Heart left ventricle (tissue), 16 donors: ENCODE measurements at regions of chr13 and their contacts with region 1.

Region 1: DNA sequence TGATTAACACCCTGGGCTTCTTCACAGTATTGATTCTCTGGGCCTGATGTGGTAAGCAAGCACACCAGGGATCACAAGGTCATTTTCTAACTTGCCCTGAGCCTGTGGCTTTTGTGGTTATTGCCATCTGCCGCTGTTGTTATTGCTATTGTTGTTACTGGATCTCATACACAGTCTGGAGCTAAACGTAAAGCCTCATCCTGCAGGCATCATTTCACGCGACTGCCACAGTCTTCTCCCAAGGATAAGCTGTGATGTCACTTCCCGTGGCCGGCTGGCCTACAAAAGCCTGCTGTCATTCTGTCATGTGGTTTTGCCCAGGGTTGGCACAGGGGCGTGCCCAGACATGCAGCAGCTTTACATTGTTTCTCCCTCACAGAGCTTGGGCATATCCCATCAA is 154.0 kb upstream of the GPR12 start:
- DNase-seq: no peak
- ATAC-seq: no peak
- H3K4me3 ChIP-seq: no peak overlapping the region
- H3K27ac ChIP-seq: no peak overlapping the region
- H3K4me1 ChIP-seq: no peaks in the 10 kb centered on the region
- H3K27me3 ChIP-seq: peaks cover 0 to 12% (median 0%) of the 10 kb centered on the region in 9 donors
- CTCF ChIP-seq: no peak
- POLR2A ChIP-seq: no peak

Region 2: DNA sequence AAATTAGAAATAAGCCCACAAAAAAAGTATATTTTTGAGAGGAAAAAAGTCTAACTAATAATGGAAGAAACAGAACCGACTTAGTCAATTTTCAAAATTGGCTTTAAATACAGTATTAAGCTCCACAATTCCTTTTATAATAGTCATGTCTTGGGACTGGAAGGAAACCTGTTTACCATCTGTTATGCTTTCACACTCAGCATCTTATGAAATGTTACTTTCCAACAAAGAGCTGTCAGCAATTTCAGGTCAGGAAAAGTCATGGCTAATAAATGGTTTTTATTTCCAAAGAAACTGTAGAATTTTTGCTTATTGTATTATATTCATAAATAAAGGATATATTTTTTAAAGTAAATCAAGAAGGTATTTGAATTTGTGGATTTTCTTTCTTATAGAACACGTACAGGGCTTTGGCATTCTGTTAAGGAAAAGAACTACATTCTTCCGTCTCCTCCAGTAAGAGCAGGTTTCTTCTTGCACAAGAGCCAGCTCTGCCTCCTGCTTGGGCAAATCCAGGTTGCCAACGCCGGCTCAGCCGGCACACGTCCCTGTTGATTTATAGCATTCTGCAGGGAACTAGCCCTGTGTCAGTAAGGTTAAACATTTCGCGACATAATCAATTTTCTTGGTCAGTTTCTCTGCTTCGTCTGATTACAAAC is 101.2 kb before region 1 on chr13:
- intact Hi-C with region 1: no loop called
- DNase-seq: no peak
- ATAC-seq: no peak
- H3K4me3 ChIP-seq: no peak overlapping the region
- H3K27ac ChIP-seq: no peak overlapping the region
- H3K4me1 ChIP-seq: no peaks in the 10 kb centered on the region
- H3K27me3 ChIP-seq: no peaks in the 10 kb centered on the region
- CTCF ChIP-seq: no peak
- POLR2A ChIP-seq: no peak

Region 3: DNA sequence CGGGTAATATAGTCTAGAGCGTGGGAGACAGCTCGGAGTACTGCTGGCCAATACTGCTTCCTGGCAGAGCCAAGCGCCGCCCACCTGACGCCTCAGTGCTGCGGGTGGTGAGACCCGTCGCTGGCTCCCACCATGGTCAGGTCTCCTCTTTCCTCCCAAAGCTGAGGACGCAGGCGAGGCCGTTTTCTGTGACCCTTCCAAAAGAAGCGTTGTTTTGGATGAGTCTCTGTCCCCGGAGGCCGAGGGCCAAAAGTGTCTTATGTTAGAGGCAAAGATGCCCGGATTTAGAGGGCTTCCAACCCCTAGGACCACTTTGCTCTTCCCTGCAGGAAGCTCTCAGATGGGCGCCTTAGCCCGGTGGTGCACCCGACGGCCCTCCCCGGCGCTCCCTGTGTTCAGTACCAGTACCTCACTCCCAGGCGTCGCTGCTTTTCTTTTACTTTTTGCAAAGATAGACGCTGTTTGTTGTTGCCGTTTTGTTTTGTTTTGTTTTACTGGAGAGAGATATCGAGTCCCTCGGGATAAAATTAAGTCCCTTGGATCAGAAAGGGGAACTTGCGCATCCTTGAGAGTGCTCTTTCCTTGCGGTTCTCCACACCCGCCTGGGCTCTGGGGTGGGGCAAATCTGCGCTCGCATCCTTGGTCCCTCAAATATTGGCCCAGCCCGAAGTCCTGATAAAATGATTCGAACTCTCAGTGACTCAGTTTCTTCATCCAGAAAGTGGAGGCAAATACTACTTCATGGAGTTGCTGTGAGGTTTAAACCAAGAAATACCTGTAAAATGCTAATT is 1012.2 kb after region 1 on chr13:
- intact Hi-C with region 1: loop called in 1 of 10 experiments (anchors 5 kb)
- DNase-seq: no peak
- ATAC-seq: no peak
- H3K4me3 ChIP-seq: no peak overlapping the region
- H3K27ac ChIP-seq: no peak overlapping the region
- H3K4me1 ChIP-seq: peaks cover 0 to 18% (median 0%) of the 10 kb centered on the region in 12 donors
- H3K27me3 ChIP-seq: peaks cover 64 to 100% (median 94%) of the 10 kb centered on the region in 9 donors
- CTCF ChIP-seq: no peak
- POLR2A ChIP-seq: no peak